Heart right ventricle (tissue), 16 donors: ENCODE measurements at regions of chr5 and their contacts with region 1.

Region 1: DNA sequence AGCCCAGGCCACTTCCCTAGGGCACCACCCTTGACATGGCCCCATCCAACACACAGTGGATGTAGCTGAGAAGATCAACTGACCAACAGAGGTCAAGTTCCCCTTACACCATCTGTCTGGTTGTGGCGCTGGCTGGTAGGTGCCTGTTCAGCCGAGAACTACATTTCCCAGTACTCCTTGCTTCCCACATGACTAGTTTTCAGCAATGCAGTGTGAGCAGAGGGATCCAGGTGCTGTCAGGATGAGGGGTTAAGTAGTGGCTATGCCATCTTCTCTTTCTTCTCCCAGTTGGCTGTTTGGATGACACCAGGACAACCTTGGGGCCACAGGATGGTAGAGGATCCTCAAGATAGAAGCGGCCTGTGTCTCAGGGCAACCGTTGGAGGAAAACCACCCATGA is 48.6 kb upstream of the SH3PXD2B start:
- DNase-seq: peak in 1 of 2 donors; percentile 5
- ATAC-seq: no peak
- H3K4me3 ChIP-seq: no peak overlapping the region
- H3K27ac ChIP-seq: peak overlapping the region; percentile 69 to 92 (median 86)
- H3K4me1 ChIP-seq: peaks cover 3 to 39% (median 22%) of the 10 kb centered on the region in 9 donors
- H3K27me3 ChIP-seq: no peaks in the 10 kb centered on the region
- CTCF ChIP-seq: no peak

Region 2: GRCh38 chr5:172479044-172479783 is 23.8 kb before region 1 on chr5:
- intact Hi-C with region 1: loop called in 1 of 10 experiments (anchors 1 kb)
- DNase-seq: peak; percentile 83 to 92
- ATAC-seq: peak; percentile 94 to 98 (median 96)
- H3K4me3 ChIP-seq: peak overlapping the region in 5 of 10 donors; percentile 21 to 41 (median 28)
- H3K27ac ChIP-seq: peak overlapping the region; percentile 17 to 87 (median 78)
- H3K4me1 ChIP-seq: peaks cover 5 to 43% (median 15%) of the 10 kb centered on the region in 9 donors
- H3K27me3 ChIP-seq: no peaks in the 10 kb centered on the region
- CTCF ChIP-seq: peak; percentile 81 to 95 (median 86)

Region 3: GRCh38 chr5:172544371-172545095 is 41.6 kb after region 1 on chr5:
- intact Hi-C with region 1: loop called in 1 of 10 experiments (anchors 5 kb)
- DNase-seq: no peak
- ATAC-seq: peak in 1 of 8 donors; percentile 22
- H3K4me3 ChIP-seq: no peak overlapping the region
- H3K27ac ChIP-seq: no peak overlapping the region
- H3K4me1 ChIP-seq: peaks cover 2 to 16% (median 11%) of the 10 kb centered on the region in 9 donors
- H3K27me3 ChIP-seq: no peaks in the 10 kb centered on the region
- CTCF ChIP-seq: no peak

Region 4: GRCh38 chr5:172574871-172575223 is 71.9 kb after region 1 on chr5:
- intact Hi-C with region 1: loop called in 2 of 10 experiments (anchors 5 kb)
- DNase-seq: no peak
- ATAC-seq: peak in 5 of 8 donors; percentile 2 to 51 (median 30)
- H3K4me3 ChIP-seq: no peak overlapping the region
- H3K27ac ChIP-seq: peak overlapping the region in 6 of 10 donors; percentile 10 to 56 (median 49)
- H3K4me1 ChIP-seq: peaks cover 8 to 59% (median 26%) of the 10 kb centered on the region in 9 donors
- H3K27me3 ChIP-seq: no peaks in the 10 kb centered on the region
- CTCF ChIP-seq: no peak

Region 5: GRCh38 chr5:172594867-172595466 is 92.0 kb after region 1 on chr5:
- intact Hi-C with region 1: loop called in 3 of 10 experiments (anchors 5 to 10 kb)
- DNase-seq: no peak
- ATAC-seq: no peak
- H3K4me3 ChIP-seq: no peak overlapping the region
- H3K27ac ChIP-seq: peak overlapping the region in 2 of 10 donors; percentile 15 to 30
- H3K4me1 ChIP-seq: peaks cover 0 to 27% (median 11%) of the 10 kb centered on the region in 9 donors
- H3K27me3 ChIP-seq: no peaks in the 10 kb centered on the region
- CTCF ChIP-seq: no peak

Region 6: DNA sequence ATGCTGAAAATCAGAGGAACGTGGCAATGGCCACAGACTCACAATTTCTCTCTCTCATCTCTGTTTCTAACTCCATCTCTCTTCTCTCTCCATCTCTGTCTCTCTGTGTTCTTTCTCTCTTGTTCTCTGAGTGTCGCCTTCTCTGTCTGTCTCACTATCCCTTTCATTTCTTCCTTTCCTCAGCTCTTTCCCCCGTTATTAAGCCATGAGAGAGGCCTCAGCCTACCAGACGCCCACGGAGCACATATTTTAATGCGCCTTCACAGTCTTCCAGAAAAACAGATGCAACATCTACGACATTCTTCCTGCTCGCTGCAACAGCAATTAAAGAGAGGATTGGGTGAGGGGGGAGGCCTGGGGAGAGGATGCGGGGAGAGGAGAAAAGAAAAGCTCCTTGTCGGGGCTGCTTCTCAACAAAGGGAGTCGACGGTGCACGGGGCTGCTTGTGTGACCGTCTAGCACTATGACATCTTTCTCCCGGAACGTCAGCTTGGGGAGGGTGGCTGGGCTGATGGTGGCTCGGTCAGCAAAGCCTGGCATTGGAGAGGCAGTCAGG is 100.4 kb after region 1 on chr5:
- intact Hi-C with region 1: loop called in 3 of 10 experiments (anchors 5 to 10 kb)
- DNase-seq: peak in 1 of 2 donors; percentile 70
- ATAC-seq: peak; percentile 27 to 68 (median 48)
- H3K4me3 ChIP-seq: peak overlapping the region in 1 of 10 donors; percentile 16
- H3K27ac ChIP-seq: peak overlapping the region; percentile 72 to 96 (median 88)
- H3K4me1 ChIP-seq: peaks cover 7 to 81% (median 37%) of the 10 kb centered on the region in 9 donors
- H3K27me3 ChIP-seq: no peaks in the 10 kb centered on the region
- CTCF ChIP-seq: no peak

Region 7: GRCh38 chr5:173245319-173246134 is 742.6 kb after region 1 on chr5:
- intact Hi-C with region 1: no loop called
- DNase-seq: peak in 1 of 2 donors; percentile 45
- ATAC-seq: peak in 7 of 8 donors; percentile 28 to 56 (median 48)
- H3K4me3 ChIP-seq: peak overlapping the region in 8 of 10 donors; percentile 12 to 58 (median 52)
- H3K27ac ChIP-seq: peak overlapping the region; percentile 70 to 94 (median 90)
- H3K4me1 ChIP-seq: peaks cover 0 to 43% (median 12%) of the 10 kb centered on the region in 9 donors
- H3K27me3 ChIP-seq: peaks cover 4 to 98% (median 91%) of the 10 kb centered on the region in 7 donors
- CTCF ChIP-seq: no peak